ENCODE measurements at regions of chr7 and their contacts with region 1.

Region 1: GRCh38 chr7:22350466-22351328 is 6.3 kb downstream of the RAPGEF5 start:
- DNase-seq: peak; percentile 90
- ATAC-seq: peak; percentile 88
- H3K4me3 ChIP-seq: peak overlapping the region in 2 of 3 experiments; percentile 14 to 39; a peak in 2 of 6 replicates
- H3K27ac ChIP-seq: peak overlapping the region; percentile 69
- H3K4me1 ChIP-seq: peaks cover 100% of the 10 kb centered on the region
- H3K27me3 ChIP-seq: no peaks in the 10 kb centered on the region
- CTCF ChIP-seq: no peak
- EP300 ChIP-seq: 0 out of 4 replicates have a peak, but pooled peaks of 1 of the 2 experiments have one; percentile 51
- POLR2A ChIP-seq: no peak
- RAD21 ChIP-seq: no peak

Region 2: DNA sequence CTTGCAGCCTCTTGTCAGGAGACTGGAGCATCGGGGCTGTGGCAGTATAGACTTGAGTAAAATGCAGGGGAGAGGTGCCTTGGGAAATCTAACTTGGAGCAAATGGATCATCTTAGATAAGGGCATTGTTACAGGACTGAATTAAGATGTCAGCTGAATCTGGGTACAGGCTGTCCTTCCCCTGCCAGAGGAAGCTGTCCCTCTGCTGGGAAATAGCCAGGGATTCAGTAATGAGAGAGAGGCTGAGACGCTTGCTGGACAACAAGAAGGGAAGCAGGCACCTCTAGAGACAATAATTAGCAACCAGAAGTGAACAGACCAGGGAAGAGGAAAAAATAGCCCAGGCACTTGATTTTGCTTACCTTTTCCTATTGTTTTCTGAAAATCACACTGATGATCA is 27.0 kb after region 1 on chr7:
- CTCF ChIA-PET with region 1: no interaction called
- POLR2A ChIA-PET with region 1: interaction called, 26 read pairs
- in situ Hi-C with region 1: no loop called
- intact Hi-C with region 1: loop called (anchors 1 kb)
- DNase-seq: no peak
- ATAC-seq: peak; percentile 47
- H3K4me3 ChIP-seq: peak overlapping the region in 1 of 3 experiments; percentile 46; a peak in 1 of 6 replicates
- H3K27ac ChIP-seq: peak overlapping the region; percentile 81
- H3K4me1 ChIP-seq: peaks cover 59% of the 10 kb centered on the region
- H3K27me3 ChIP-seq: no peaks in the 10 kb centered on the region
- CTCF ChIP-seq: no peak
- EP300 ChIP-seq: no peak
- POLR2A ChIP-seq: no peak
- RAD21 ChIP-seq: no peak